ENCODE measurements at regions of chr15 and their contacts with region 1.

Region 1: DNA sequence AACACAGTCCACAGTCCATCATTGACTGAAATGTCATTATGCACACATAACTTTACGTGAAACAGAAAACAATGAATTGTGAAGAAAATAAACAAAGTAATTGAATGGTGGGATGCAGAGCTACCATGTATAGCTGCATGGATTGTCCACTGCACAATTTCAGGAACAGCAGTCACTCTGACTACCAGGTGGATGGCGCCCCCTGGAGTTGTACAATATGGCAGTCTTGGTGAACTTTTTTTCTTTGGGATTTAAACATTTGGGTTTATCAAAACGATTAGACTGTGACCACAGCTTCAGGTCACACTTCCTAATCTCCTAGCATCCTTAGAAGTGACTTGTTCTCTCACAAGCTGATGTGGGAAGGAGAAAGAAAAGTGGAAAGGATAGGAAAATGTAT is 48.9 kb upstream of the TCF12 start:
- DNase-seq: peak; percentile 57
- ATAC-seq: no peak

Region 2: GRCh38 chr15:56491110-56491722 is 378.4 kb before region 1 on chr15:
- intact Hi-C with region 1: loop called (anchors 5 to 10 kb)
- DNase-seq: peak; percentile 58
- ATAC-seq: peak; percentile 57 to 75

Region 3: DNA sequence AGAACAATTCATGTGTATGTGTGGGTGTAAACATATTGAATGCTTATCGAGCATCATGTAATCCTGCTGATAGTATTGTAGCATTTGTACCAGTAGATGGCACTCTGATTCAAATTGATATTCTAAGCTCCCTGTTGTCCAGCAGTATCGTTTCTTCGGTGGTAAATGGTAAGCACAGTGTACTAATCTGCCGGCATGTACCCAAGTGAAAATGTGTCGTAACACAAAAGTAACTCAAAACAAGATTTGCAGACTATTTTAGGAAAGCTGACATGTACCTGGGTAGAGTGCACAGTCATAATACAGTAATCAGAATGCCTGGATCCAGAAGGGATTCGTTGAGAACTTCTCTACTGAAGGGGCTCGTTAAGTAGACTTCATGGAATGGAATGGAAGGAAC is 372.9 kb before region 1 on chr15:
- intact Hi-C with region 1: loop called (anchors 5 to 10 kb)
- DNase-seq: no peak
- ATAC-seq: peak; percentile 81 to 84

Region 4: GRCh38 chr15:56821721-56822425 is 47.7 kb before region 1 on chr15:
- intact Hi-C with region 1: loop called in 1 of 2 experiments (anchors 5 kb)
- DNase-seq: peak; percentile 36
- ATAC-seq: peak; percentile 76 to 88

Region 5: GRCh38 chr15:56906771-56907170 is 37.2 kb after region 1 on chr15:
- intact Hi-C with region 1: no loop called
- DNase-seq: no peak
- ATAC-seq: no peak

Region 6: GRCh38 chr15:56984681-56985481 is 115.3 kb after region 1 on chr15:
- intact Hi-C with region 1: no loop called
- DNase-seq: no peak
- ATAC-seq: peak in 1 of 2 donors; percentile 74